Activated T-helper 2 cell treated with anti-CD3 and anti-CD28 coated beads, Interferon-gamma antibody, Interleukin-2, Interleukin-4, amounts not matched to agents 10 μg/mL and 5 μg/mL and 100 μg/mL, durations not matched to agents 14 hours and 24 hours and 36 hours (primary cell): ENCODE measurements at regions of chr5 and their contacts with region 1.

Region 1: GRCh38 chr5:180084688-180085561 is 13.4 kb upstream of the RNF130 start:
- DNase-seq: no peak
- H3K4me3 Mint-ChIP-seq: no peak overlapping the region
- H3K27ac Mint-ChIP-seq: no peak overlapping the region
- H3K4me1 Mint-ChIP-seq: peaks cover 12% of the 10 kb centered on the region
- H3K27me3 Mint-ChIP-seq: peaks cover 7% of the 10 kb centered on the region

Region 2: DNA sequence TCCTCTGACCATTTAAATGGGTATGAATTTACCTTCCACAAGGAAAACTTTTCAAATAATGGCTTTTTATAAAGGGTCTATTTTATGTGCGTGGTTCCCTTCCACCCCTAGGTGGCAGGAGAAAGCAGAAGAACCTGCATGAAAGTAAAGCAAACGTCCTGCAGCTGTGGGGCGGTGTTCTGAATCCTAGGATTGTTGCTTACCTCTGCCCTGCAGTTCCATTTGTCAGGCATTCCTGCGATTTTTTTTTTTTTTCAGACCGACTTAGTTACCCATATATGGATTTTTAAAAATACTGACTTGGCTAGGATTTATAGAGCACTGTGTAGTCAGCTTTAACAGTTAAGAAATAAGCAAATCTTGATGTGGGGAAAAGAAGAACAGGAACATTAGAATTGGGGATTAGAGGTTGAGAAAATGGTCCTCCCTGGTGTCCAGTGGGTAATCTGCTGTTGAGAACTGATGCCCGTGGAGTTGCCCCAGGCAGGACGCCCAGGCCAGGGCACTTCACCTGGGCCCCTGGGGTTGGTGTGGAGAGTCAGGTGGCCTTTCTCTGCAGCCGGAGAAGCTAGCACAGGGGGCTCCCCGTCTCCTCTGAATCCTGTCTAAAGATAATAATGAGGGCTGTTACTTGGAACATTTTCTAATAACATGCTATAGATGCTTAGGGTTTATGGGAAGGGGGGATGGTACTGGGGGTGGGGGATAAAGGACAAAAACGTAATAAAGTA is 321.5 kb before region 1 on chr5:
- intact Hi-C with region 1: loop called (anchors 5 kb)
- DNase-seq: peak; percentile 21
- H3K4me3 Mint-ChIP-seq: no peak overlapping the region
- H3K27ac Mint-ChIP-seq: peak overlapping the region; percentile 56
- H3K4me1 Mint-ChIP-seq: peaks cover 46% of the 10 kb centered on the region
- H3K27me3 Mint-ChIP-seq: no peaks in the 10 kb centered on the region

Region 3: DNA sequence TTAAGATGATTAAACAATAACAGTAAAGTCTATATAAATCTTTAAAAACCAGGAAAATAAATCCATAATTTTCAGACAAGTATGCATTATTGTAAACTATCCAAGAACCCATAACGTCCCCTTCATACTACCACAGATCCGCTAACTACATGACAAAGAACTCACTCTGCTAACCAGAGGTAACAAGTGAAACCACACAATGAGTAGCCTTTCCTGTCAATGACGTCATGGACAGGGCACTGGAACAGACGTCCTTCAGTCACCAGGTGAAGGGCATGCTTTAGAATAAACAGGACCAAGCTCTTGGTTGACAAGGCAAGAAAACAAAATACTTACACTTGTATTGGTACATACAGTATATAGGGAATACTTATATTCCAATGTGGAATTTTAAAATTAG is 58.6 kb before region 1 on chr5:
- intact Hi-C with region 1: no loop called
- DNase-seq: no peak
- H3K4me3 Mint-ChIP-seq: no peak overlapping the region
- H3K27ac Mint-ChIP-seq: no peak overlapping the region
- H3K4me1 Mint-ChIP-seq: no peaks in the 10 kb centered on the region
- H3K27me3 Mint-ChIP-seq: no peaks in the 10 kb centered on the region

Region 4: DNA sequence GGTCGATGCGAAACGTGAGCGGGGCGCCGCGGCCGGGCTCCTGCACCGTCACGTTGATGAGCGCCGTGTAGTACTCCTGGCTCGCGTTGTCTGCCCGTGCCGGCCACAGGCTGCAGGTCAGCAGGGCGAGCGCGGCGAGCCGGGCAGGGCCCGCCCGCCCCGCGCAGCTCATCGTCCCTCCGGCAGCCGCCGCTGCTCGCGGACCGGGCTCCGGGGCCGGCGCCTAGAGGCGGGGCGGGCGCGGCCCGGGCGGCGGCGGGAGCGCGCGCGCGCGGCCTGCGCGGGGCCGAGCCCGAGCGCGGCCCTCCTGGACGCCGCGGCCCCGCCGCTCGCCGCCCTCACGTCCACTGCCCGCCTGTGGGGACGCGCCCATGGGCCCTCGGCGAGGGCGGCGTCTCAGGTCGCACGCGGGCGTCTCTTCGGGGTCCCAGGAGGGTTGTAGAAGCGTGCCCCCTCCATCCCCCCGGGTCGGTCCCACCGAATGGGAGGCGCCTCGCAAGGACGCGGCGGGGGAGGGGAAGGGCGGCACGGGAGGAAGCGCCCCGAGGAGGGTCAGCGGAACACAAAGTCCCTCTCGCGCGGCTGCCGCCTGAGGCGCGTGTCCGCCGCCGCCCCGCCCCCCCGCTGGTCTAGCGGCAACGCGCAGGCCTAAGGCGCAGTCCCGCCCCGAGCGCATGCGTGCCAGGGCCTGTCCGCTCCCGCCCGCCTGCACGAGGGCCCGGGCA is 13.2 kb before region 1 on chr5 and contains the start of gene RNF130:
- intact Hi-C with region 1: loop called (anchors 1 kb)
- DNase-seq: peak; percentile 78
- H3K4me3 Mint-ChIP-seq: peak within 1 kb of the TSS; percentile 80
- H3K27ac Mint-ChIP-seq: no peak within 1 kb of the TSS
- H3K4me1 Mint-ChIP-seq: peaks cover 13% of the 10 kb centered on the region
- H3K27me3 Mint-ChIP-seq: peaks cover 55% of the 10 kb centered on the region
- total RNA-seq, gene RNF130: 10.0 and 10.3 TPM in 2 replicates